KBM-7 (cell line): ENCODE measurements at regions of chr16 and their contacts with region 1.

Region 1: GRCh38 chr16:84484579-84485254 is 19.7 kb downstream of the MEAK7 start:
- DNase-seq: peak; percentile 45

Region 2: GRCh38 chr16:83952940-83953795 is 531.5 kb before region 1 on chr16 and contains the start of gene OSGIN1:
- in situ Hi-C with region 1: loop called (anchors 25 kb)
- DNase-seq: peak; percentile 92